T-cell (primary cell): ENCODE measurements at regions of chr4 and their contacts with region 1.

Region 1: DNA sequence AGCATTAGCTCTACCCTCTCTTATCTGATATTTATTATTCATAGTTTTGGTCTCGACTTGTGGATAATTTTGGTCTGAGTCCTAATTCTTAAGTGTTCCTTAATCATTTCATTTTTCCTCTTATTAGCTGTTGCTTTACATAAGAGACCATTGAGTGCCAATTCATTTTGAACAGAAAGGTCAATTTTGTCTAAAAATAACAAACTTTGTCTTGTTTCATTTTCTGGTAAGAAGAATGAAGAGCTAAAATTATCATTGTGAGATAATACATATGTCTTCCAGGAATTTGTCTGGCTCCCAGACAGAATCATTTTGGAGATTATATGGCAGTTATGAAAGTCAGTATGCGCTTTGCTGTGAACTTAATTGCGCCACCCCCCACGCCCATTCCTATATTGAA is 1471.8 kb downstream of the PCDH7 start:
- DNase-seq: no peak
- ATAC-seq: no peak
- H3K4me3 ChIP-seq: no peak overlapping the region
- H3K4me3 Mint-ChIP-seq: no peak overlapping the region
- H3K27ac ChIP-seq: no peak overlapping the region
- H3K27ac Mint-ChIP-seq: no peak overlapping the region
- H3K4me1 ChIP-seq: no peaks in the 10 kb centered on the region
- H3K4me1 Mint-ChIP-seq: no peaks in the 10 kb centered on the region
- H3K27me3 ChIP-seq: no peaks in the 10 kb centered on the region
- H3K27me3 Mint-ChIP-seq: no peaks in the 10 kb centered on the region

Region 2: GRCh38 chr4:32161382-32161781 is 30.6 kb before region 1 on chr4:
- CTCF ChIA-PET with region 1: no interaction called
- POLR2A ChIA-PET with region 1: interaction called in 1 of 2 experiments, 11 read pairs
- DNase-seq: no peak
- ATAC-seq: no peak
- H3K4me3 ChIP-seq: no peak overlapping the region
- H3K4me3 Mint-ChIP-seq: no peak overlapping the region
- H3K27ac ChIP-seq: no peak overlapping the region
- H3K27ac Mint-ChIP-seq: no peak overlapping the region
- H3K4me1 ChIP-seq: no peaks in the 10 kb centered on the region
- H3K4me1 Mint-ChIP-seq: no peaks in the 10 kb centered on the region
- H3K27me3 ChIP-seq: no peaks in the 10 kb centered on the region
- H3K27me3 Mint-ChIP-seq: no peaks in the 10 kb centered on the region

Region 3: DNA sequence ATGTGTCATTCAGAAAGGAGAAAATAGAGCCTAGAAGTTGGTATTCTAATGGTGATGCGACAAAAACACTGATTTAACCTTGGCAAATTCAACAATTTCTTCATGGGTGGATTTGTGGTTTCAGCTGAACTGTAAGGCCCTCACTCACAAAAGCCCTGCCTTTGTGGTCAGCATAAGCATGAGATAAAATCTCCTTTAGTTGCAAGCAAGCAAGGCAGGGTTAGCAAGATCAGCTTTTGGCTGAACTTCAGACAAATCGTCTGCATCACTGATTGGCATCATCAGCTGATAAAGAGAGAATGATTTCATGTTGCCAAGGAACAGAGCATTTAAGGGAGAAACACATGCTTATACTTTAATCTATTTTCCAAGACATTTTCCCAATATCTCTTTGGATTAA is 1110.4 kb after region 1 on chr4:
- CTCF ChIA-PET with region 1: no interaction called
- POLR2A ChIA-PET with region 1: no interaction called
- DNase-seq: no peak
- ATAC-seq: no peak
- H3K4me3 ChIP-seq: no peak overlapping the region
- H3K4me3 Mint-ChIP-seq: no peak overlapping the region
- H3K27ac ChIP-seq: no peak overlapping the region
- H3K27ac Mint-ChIP-seq: no peak overlapping the region
- H3K4me1 ChIP-seq: no peaks in the 10 kb centered on the region
- H3K4me1 Mint-ChIP-seq: no peaks in the 10 kb centered on the region
- H3K27me3 ChIP-seq: no peaks in the 10 kb centered on the region
- H3K27me3 Mint-ChIP-seq: no peaks in the 10 kb centered on the region